CD8-positive, alpha-beta memory T cell (primary cell): ENCODE measurements at regions of chr16 and their contacts with region 1.

Region 1: GRCh38 chr16:84726079-84726668 is 26.4 kb downstream of the USP10 start:
- DNase-seq: peak; percentile 62 to 85 (median 77)
- H3K4me3 ChIP-seq: peak overlapping the region; percentile 15
- H3K4me3 Mint-ChIP-seq: peak overlapping the region in 6 of 7 donors; percentile 29 to 68 (median 62)
- H3K27ac ChIP-seq: no peak overlapping the region
- H3K27ac Mint-ChIP-seq: peak overlapping the region in 4 of 8 donors; percentile 56 to 83 (median 78)
- H3K4me1 ChIP-seq: peaks cover 31% of the 10 kb centered on the region
- H3K4me1 Mint-ChIP-seq: peaks cover 47 to 71% (median 70%) of the 10 kb centered on the region in 3 donors
- H3K27me3 ChIP-seq: no peaks in the 10 kb centered on the region
- H3K27me3 Mint-ChIP-seq: no peaks in the 10 kb centered on the region

Region 2: GRCh38 chr16:84504420-84505248 is 221.5 kb before region 1 on chr16 and contains the start of gene MEAK7:
- CTCF ChIA-PET with region 1: interaction called, 13 read pairs
- POLR2A ChIA-PET with region 1: no interaction called
- DNase-seq: peak; percentile 94 to 98 (median 97)
- H3K4me3 ChIP-seq: peak within 1 kb of the TSS; percentile 95
- H3K4me3 Mint-ChIP-seq: peak within 1 kb of the TSS; percentile 83 to 96 (median 88)
- H3K27ac ChIP-seq: peak within 1 kb of the TSS; percentile 73
- H3K27ac Mint-ChIP-seq: peak within 1 kb of the TSS; percentile 6 to 97 (median 87)
- H3K4me1 ChIP-seq: peaks cover 56% of the 10 kb centered on the region
- H3K4me1 Mint-ChIP-seq: peaks cover 40 to 62% (median 52%) of the 10 kb centered on the region in 3 donors
- H3K27me3 ChIP-seq: no peaks in the 10 kb centered on the region
- H3K27me3 Mint-ChIP-seq: no peaks in the 10 kb centered on the region
- total RNA-seq, gene MEAK7: 6.7 to 7.7 TPM

Region 3: GRCh38 chr16:84672276-84673202 is 53.6 kb before region 1 on chr16:
- CTCF ChIA-PET with region 1: interaction called, 30 read pairs
- POLR2A ChIA-PET with region 1: no interaction called
- DNase-seq: peak; percentile 59 to 85 (median 74)
- H3K4me3 ChIP-seq: no peak overlapping the region
- H3K4me3 Mint-ChIP-seq: no peak overlapping the region
- H3K27ac ChIP-seq: no peak overlapping the region
- H3K27ac Mint-ChIP-seq: peak overlapping the region in 2 of 8 donors; percentile 61 to 89
- H3K4me1 ChIP-seq: no peaks in the 10 kb centered on the region
- H3K4me1 Mint-ChIP-seq: peaks cover 0 to 7% (median 6%) of the 10 kb centered on the region in 3 donors
- H3K27me3 ChIP-seq: no peaks in the 10 kb centered on the region
- H3K27me3 Mint-ChIP-seq: peaks cover 2 to 5% of the 10 kb centered on the region in 2 donors

Region 4: DNA sequence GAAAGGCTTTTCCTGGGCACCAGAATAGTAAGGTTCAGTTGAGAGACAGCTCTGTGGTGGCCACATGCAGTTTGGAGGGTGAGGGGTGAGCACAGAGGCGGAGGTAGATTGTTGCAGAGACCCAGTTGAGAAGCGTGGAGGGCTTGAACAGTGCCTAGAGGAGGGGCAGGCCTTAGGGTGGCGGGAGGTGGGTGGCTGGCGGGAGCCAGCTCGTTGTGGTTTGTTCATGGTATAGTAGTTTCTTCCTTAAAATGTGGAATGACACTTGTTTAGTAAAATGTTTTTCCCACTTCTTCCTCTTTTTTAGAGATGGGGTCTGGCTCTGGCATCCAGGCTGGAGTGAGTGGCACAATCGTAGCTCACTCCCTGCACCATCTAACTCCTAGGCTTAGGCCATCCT is 12.1 kb before region 1 on chr16:
- CTCF ChIA-PET with region 1: interaction called, 25 read pairs
- POLR2A ChIA-PET with region 1: no interaction called
- DNase-seq: no peak
- H3K4me3 ChIP-seq: no peak overlapping the region
- H3K4me3 Mint-ChIP-seq: no peak overlapping the region
- H3K27ac ChIP-seq: no peak overlapping the region
- H3K27ac Mint-ChIP-seq: peak overlapping the region in 1 of 8 donors; percentile 1
- H3K4me1 ChIP-seq: peaks cover 36% of the 10 kb centered on the region
- H3K4me1 Mint-ChIP-seq: peaks cover 72 to 94% (median 87%) of the 10 kb centered on the region in 3 donors
- H3K27me3 ChIP-seq: no peaks in the 10 kb centered on the region
- H3K27me3 Mint-ChIP-seq: no peaks in the 10 kb centered on the region